ENCODE measurements at regions of chr14 and their contacts with region 1.

Region 1: GRCh38 chr14:57317316-57317715 is 48.5 kb downstream of the AP5M1 start:
- DNase-seq: peak; percentile 39 to 81 (median 72)
- ATAC-seq: no peak
- H3K4me3 ChIP-seq: no peak overlapping the region
- H3K4me3 Mint-ChIP-seq: no peak overlapping the region
- H3K27ac ChIP-seq: no peak overlapping the region
- H3K27ac Mint-ChIP-seq: no peak overlapping the region
- H3K4me1 ChIP-seq: no peaks in the 10 kb centered on the region
- H3K4me1 Mint-ChIP-seq: peaks cover 3% of the 10 kb centered on the region
- H3K27me3 ChIP-seq: no peaks in the 10 kb centered on the region
- H3K27me3 Mint-ChIP-seq: peaks cover 6% of the 10 kb centered on the region
- CTCF ChIP-seq: peak; percentile 94

Region 2: GRCh38 chr14:55707365-55707804 is 1609.9 kb before region 1 on chr14:
- CTCF ChIA-PET with region 1: no interaction called
- POLR2A ChIA-PET with region 1: no interaction called
- intact Hi-C with region 1: loop called in 1 of 2 experiments (anchors 10 kb)
- DNase-seq: peak in 2 of 9 experiments; percentile 25 to 30
- ATAC-seq: no peak
- H3K4me3 ChIP-seq: no peak overlapping the region
- H3K4me3 Mint-ChIP-seq: no peak overlapping the region
- H3K27ac ChIP-seq: no peak overlapping the region
- H3K27ac Mint-ChIP-seq: no peak overlapping the region
- H3K4me1 ChIP-seq: no peaks in the 10 kb centered on the region
- H3K4me1 Mint-ChIP-seq: no peaks in the 10 kb centered on the region
- H3K27me3 ChIP-seq: no peaks in the 10 kb centered on the region
- H3K27me3 Mint-ChIP-seq: no peaks in the 10 kb centered on the region
- CTCF ChIP-seq: no peak

Region 3: GRCh38 chr14:56555921-56556570 is 761.3 kb before region 1 on chr14:
- CTCF ChIA-PET with region 1: no interaction called
- POLR2A ChIA-PET with region 1: no interaction called
- intact Hi-C with region 1: loop called (anchors 2 to 5 kb)
- DNase-seq: peak in 2 of 9 experiments; percentile 16 to 29
- ATAC-seq: no peak
- H3K4me3 ChIP-seq: no peak overlapping the region
- H3K4me3 Mint-ChIP-seq: no peak overlapping the region
- H3K27ac ChIP-seq: no peak overlapping the region
- H3K27ac Mint-ChIP-seq: no peak overlapping the region
- H3K4me1 ChIP-seq: no peaks in the 10 kb centered on the region
- H3K4me1 Mint-ChIP-seq: no peaks in the 10 kb centered on the region
- H3K27me3 ChIP-seq: peaks cover 0 to 1% of the 10 kb centered on the region in 2 experiments
- H3K27me3 Mint-ChIP-seq: peaks cover 41% of the 10 kb centered on the region
- CTCF ChIP-seq: peak; percentile 25

Region 4: DNA sequence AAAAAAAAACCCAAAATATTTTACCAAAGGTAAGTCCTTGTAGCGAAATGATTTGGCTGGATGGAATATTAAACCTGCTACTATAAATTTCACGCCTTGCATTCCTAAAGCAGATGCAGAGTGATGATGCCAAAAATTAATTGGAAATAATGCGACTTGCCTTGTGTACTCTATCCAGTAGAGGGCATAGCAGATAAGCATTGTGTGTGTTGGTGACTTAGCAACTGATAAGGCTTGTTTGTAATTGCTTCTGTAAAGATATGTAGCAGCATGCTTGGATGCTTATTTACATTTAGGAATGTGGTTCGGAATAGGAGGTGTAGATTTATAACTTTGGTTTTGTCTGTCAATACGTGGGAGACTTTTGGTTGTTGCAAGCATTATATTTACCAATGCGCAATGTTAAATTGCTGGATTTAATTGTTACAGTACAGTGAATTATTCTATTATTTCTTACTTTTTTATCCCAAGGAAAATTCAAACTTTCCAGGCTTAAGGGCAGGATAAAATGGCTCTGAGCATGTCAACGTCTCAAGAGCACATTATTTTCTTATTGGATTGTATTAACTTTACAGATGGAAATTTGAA is 657.3 kb before region 1 on chr14:
- CTCF ChIA-PET with region 1: no interaction called
- POLR2A ChIA-PET with region 1: no interaction called
- intact Hi-C with region 1: loop called in 1 of 2 experiments (anchors 5 kb)
- DNase-seq: peak in 2 of 9 experiments; percentile 3 to 8
- ATAC-seq: no peak
- H3K4me3 ChIP-seq: no peak overlapping the region
- H3K4me3 Mint-ChIP-seq: no peak overlapping the region
- H3K27ac ChIP-seq: no peak overlapping the region
- H3K27ac Mint-ChIP-seq: no peak overlapping the region
- H3K4me1 ChIP-seq: no peaks in the 10 kb centered on the region
- H3K4me1 Mint-ChIP-seq: no peaks in the 10 kb centered on the region
- H3K27me3 ChIP-seq: no peaks in the 10 kb centered on the region
- H3K27me3 Mint-ChIP-seq: no peaks in the 10 kb centered on the region
- CTCF ChIP-seq: no peak

Region 5: GRCh38 chr14:57078054-57078453 is 239.3 kb before region 1 on chr14:
- CTCF ChIA-PET with region 1: no interaction called
- POLR2A ChIA-PET with region 1: no interaction called
- intact Hi-C with region 1: loop called in 1 of 2 experiments (anchors 10 kb)
- DNase-seq: no peak
- ATAC-seq: no peak
- H3K4me3 ChIP-seq: no peak overlapping the region
- H3K4me3 Mint-ChIP-seq: no peak overlapping the region
- H3K27ac ChIP-seq: no peak overlapping the region
- H3K27ac Mint-ChIP-seq: no peak overlapping the region
- H3K4me1 ChIP-seq: no peaks in the 10 kb centered on the region
- H3K4me1 Mint-ChIP-seq: no peaks in the 10 kb centered on the region
- H3K27me3 ChIP-seq: peaks cover 0 to 3% of the 10 kb centered on the region in 2 experiments
- H3K27me3 Mint-ChIP-seq: peaks cover 5% of the 10 kb centered on the region
- CTCF ChIP-seq: no peak

Region 6: DNA sequence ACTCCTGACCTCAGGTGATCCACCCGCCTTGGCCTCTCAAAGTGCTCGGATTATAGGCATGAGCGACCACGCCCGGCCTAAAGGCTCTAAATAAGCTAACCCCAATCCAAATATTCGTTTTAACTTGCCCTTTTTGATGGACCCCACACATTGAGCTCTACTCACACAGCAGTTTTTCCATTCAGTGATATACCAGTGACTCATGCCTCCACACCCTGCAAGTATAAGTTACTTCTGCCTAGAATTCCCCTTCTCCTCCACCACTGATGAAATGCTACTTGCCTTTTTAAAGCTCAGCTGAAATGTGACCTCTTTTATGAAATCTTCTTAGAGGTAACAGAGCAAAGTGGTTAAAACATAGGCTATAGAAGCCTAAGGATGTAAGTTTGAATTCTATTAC is 117.4 kb before region 1 on chr14:
- CTCF ChIA-PET with region 1: no interaction called
- POLR2A ChIA-PET with region 1: no interaction called
- intact Hi-C with region 1: loop called in 1 of 2 experiments (anchors 1 kb)
- DNase-seq: no peak
- ATAC-seq: no peak
- H3K4me3 ChIP-seq: no peak overlapping the region
- H3K4me3 Mint-ChIP-seq: no peak overlapping the region
- H3K27ac ChIP-seq: no peak overlapping the region
- H3K27ac Mint-ChIP-seq: no peak overlapping the region
- H3K4me1 ChIP-seq: no peaks in the 10 kb centered on the region
- H3K4me1 Mint-ChIP-seq: no peaks in the 10 kb centered on the region
- H3K27me3 ChIP-seq: no peaks in the 10 kb centered on the region
- H3K27me3 Mint-ChIP-seq: peaks cover 5% of the 10 kb centered on the region
- CTCF ChIP-seq: no peak